ENCODE measurements at regions of chr2 and their contacts with region 1.

Region 1: GRCh38 chr2:65161551-65162100 is 31.7 kb upstream of the RAB1A start:
- DNase-seq: no peak

Region 2: DNA sequence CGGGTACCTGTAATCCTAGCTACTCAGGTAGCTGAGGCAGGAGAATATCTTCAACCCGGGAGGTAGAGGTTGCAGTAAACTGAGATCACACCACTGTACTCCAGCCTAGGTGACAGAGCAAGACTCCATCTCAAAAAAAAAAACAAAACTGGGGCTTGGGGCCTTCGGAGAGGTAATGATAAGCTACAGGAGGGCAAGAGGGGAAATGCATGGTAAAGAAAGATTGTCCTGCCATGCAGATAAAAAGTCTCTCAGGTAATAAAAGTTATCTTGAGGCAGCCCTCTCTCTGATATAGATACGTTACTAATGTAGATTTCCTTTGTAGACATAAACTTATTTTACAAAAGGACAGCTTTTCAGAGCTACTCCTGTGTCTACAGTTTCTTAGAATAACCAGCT is 28.0 kb before region 1 on chr2:
- intact Hi-C with region 1: loop called in 1 of 2 experiments (anchors 2 kb)
- DNase-seq: no peak

Region 3: DNA sequence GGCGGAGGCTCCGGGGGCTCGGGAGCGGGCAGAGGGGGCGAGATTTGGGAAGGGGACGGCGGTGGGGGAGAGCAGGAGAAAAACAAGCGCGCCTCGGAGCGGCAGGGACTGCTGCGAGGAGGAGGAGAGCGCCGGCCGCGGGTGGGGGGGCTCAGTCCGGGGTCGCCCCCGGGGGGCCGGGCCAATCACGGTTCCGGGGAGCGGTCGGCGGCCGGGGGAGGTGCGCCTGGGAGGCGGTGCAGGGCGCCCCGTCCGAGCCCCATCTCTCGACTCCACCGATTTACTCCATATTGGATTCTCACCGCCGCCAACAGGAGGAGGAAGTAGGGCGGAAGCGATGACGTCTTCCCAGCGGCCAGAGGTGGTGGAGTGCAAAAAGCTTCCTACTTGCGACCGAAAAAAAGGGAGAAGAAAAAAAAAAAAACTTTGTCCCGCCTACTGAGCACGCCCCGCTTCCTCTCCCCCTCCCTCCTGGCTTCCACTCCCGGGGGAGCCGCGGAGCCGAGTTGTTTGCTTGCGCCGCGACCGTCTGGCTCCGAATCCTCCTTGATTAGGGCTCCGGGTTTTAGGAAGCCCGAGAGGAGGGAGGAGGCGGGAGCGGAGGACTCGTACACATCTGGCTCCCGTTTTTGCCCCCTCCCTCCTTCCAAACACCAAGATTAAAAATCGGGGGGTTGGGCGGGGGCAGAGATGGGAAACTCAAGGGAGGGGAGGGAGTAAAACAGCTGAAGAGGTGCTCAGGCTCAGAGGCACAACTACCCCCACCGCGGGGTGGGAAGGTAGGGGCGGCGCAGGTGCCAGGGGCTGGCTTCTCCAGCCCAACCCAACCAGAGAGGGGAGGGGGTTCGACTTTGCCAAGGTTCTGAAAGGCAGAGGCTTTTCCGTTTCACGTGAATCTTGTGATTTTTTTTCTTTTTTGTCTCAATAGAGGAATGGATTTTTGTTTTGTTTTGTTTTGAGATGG is 270.9 kb after region 1 on chr2 and contains the start of gene SPRED2:
- intact Hi-C with region 1: no loop called
- DNase-seq: peak; percentile 98
- total RNA-seq, gene SPRED2: 21.9 to 28.3 TPM